ENCODE measurements at regions of chr11 and their contacts with region 1.

Region 1: DNA sequence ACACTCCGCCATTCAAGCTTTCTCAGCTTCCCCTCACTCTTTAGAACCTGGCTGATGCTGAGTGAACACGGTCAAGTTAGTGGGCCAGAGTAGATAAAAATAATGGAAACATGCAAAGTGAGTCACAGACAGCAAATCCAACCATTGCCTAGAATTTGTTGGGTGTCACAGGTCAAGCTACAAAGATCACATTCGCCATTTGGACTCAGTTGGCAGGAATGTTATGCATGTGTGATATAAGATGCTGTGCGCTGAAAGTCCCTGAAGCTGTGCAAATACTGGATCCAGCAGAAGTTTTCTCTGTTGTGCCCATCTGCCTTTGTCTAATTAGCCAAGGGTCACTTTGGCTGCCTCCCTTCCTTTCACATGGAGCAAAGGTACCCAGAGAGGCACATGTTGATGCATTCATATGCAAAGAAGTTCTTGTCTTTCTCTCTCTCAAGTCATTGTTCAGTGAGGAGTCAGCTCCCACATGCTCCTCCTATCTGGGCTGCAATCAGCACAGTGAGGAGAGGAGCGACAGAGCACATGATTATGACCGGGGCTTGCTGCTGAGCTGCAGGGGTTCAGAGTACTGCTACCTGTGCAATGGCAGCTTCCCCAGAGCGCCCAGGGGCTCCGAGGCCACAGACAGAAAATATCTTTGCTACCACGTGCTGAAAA is 39.7 kb downstream of the FLI1 start:
- DNase-seq: peak in 3 of 9 donors; percentile 27 to 43 (median 37)
- ATAC-seq: peak; percentile 39
- H3K4me3 ChIP-seq: peak overlapping the region; percentile 20
- H3K4me3 Mint-ChIP-seq: peak overlapping the region; percentile 79 to 92 (median 85)
- H3K27ac ChIP-seq: peak overlapping the region; percentile 41
- H3K27ac Mint-ChIP-seq: peak overlapping the region; percentile 85 to 98 (median 90)
- H3K4me1 ChIP-seq: peaks cover 96 to 100% of the 10 kb centered on the region in 2 donors
- H3K4me1 Mint-ChIP-seq: peaks cover 81 to 100% (median 98%) of the 10 kb centered on the region in 7 donors
- H3K27me3 ChIP-seq: no peaks in the 10 kb centered on the region
- H3K27me3 Mint-ChIP-seq: no peaks in the 10 kb centered on the region

Region 2: GRCh38 chr11:128653801-128654231 is 79.8 kb before region 1 on chr11:
- CTCF ChIA-PET with region 1: no interaction called
- POLR2A ChIA-PET with region 1: no interaction called
- intact Hi-C with region 1: no loop called
- DNase-seq: no peak
- ATAC-seq: peak; percentile 40
- H3K4me3 ChIP-seq: no peak overlapping the region
- H3K4me3 Mint-ChIP-seq: peak overlapping the region in 8 of 10 donors; percentile 3 to 65 (median 47)
- H3K27ac ChIP-seq: no peak overlapping the region
- H3K27ac Mint-ChIP-seq: no peak overlapping the region
- H3K4me1 ChIP-seq: no peaks in the 10 kb centered on the region
- H3K4me1 Mint-ChIP-seq: peaks cover 3 to 13% (median 12%) of the 10 kb centered on the region in 7 donors
- H3K27me3 ChIP-seq: no peaks in the 10 kb centered on the region
- H3K27me3 Mint-ChIP-seq: peaks cover 0 to 41% (median 6%) of the 10 kb centered on the region in 5 donors

Region 3: DNA sequence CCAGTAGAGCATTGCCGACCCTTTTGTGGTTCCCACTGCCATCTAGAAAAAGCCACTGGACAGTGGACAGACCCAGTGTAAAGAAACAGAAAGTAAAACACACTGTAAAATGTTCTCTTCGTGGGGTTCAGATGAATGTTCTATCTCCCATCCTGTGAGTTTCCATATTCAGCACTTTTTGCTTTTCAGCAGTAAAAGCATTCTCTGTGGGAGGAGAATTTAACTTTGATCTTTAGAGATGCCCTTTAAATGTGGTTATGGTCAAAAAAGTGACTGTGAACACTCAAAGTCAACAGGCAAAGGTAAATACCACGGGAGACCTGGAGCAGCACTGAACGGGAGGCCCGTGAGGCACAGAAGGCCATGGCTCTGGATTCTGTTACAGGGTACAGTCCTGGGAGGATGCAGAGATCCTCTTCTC is 14.2 kb after region 1 on chr11:
- CTCF ChIA-PET with region 1: interaction called, 3 read pairs
- POLR2A ChIA-PET with region 1: interaction called, 9 read pairs
- intact Hi-C with region 1: loop called in 1 of 2 experiments (anchors 1 kb)
- DNase-seq: peak in 2 of 9 donors; percentile 23 to 36
- ATAC-seq: peak; percentile 31
- H3K4me3 ChIP-seq: no peak overlapping the region
- H3K4me3 Mint-ChIP-seq: peak overlapping the region; percentile 10 to 79 (median 71)
- H3K27ac ChIP-seq: peak overlapping the region; percentile 10
- H3K27ac Mint-ChIP-seq: peak overlapping the region; percentile 64 to 92 (median 86)
- H3K4me1 ChIP-seq: peaks cover 27 to 34% of the 10 kb centered on the region in 2 donors
- H3K4me1 Mint-ChIP-seq: peaks cover 56 to 90% (median 82%) of the 10 kb centered on the region in 7 donors
- H3K27me3 ChIP-seq: no peaks in the 10 kb centered on the region
- H3K27me3 Mint-ChIP-seq: no peaks in the 10 kb centered on the region